ENCODE measurements at regions of chr6 and their contacts with region 1.

Region 1: GRCh38 chr6:145814501-145815308 is at the start of gene FBXO30:
- DNase-seq: peak; percentile 80
- ATAC-seq: peak; percentile 86
- H3K4me3 ChIP-seq: peak within 1 kb of the TSS; percentile 99
- H3K27ac ChIP-seq: peak within 1 kb of the TSS; percentile 93
- H3K4me1 ChIP-seq: peaks cover 6% of the 10 kb centered on the region
- H3K27me3 ChIP-seq: no peaks in the 10 kb centered on the region
- CTCF ChIP-seq: no peak
- POLR2A ChIP-seq: peak; percentile 90
- RAD21 ChIP-seq: no peak
- total RNA-seq, gene FBXO30: 9.3 and 15.3 TPM in 2 replicates

Region 2: DNA sequence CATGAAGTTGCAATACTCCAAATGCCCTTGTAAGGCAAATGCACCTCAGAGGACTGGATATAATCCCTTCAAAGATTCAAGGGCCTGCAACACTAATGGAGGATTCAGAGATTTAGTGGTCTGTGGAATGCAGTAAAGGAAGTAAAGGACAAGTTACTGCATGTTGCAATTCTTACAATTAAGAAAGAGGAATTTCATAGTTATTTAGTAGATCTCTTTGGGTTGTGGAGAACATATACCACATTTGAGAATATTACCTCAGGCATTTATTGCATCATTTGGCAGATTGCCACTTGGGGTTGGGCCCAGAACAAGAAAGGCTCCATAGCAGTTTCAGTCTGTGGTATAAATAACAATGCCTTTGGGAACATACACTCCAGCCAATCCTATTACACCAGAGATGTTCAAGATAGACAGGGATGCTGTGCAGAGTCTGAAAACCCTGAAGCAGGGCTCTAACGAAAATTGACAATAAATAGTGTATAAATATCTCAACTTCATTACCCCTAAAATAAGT is 58.5 kb before region 1 on chr6:
- CTCF ChIA-PET with region 1: no interaction called
- POLR2A ChIA-PET with region 1: no interaction called
- dilution Hi-C with region 1: no loop called
- in situ Hi-C with region 1: no loop called
- intact Hi-C with region 1: no loop called
- DNase-seq: peak; percentile 89
- ATAC-seq: peak; percentile 79
- H3K4me3 ChIP-seq: no peak overlapping the region
- H3K27ac ChIP-seq: peak overlapping the region; percentile 72; the same call in 1 of the 2 replicates
- H3K4me1 ChIP-seq: peaks cover 3% of the 10 kb centered on the region; the same call in 1 of the 2 replicates
- H3K27me3 ChIP-seq: no peaks in the 10 kb centered on the region
- CTCF ChIP-seq: no peak
- POLR2A ChIP-seq: no peak
- RAD21 ChIP-seq: no peak

Region 3: GRCh38 chr6:145882121-145882545 is 67.4 kb after region 1 on chr6:
- CTCF ChIA-PET with region 1: no interaction called
- POLR2A ChIA-PET with region 1: no interaction called
- dilution Hi-C with region 1: no loop called
- in situ Hi-C with region 1: no loop called
- intact Hi-C with region 1: loop called (anchors 2 kb)
- DNase-seq: peak; percentile 88
- ATAC-seq: peak; percentile 83
- H3K4me3 ChIP-seq: no peak overlapping the region
- H3K27ac ChIP-seq: peak overlapping the region; percentile 91; the same call in 1 of the 2 replicates
- H3K4me1 ChIP-seq: peaks cover 7% of the 10 kb centered on the region
- H3K27me3 ChIP-seq: no peaks in the 10 kb centered on the region
- CTCF ChIP-seq: no peak
- POLR2A ChIP-seq: no peak
- RAD21 ChIP-seq: no peak

Region 4: GRCh38 chr6:145887969-145888368 is 73.3 kb after region 1 on chr6:
- CTCF ChIA-PET with region 1: no interaction called
- POLR2A ChIA-PET with region 1: no interaction called
- dilution Hi-C with region 1: no loop called
- in situ Hi-C with region 1: no loop called
- intact Hi-C with region 1: loop called (anchors 2 kb)
- DNase-seq: peak; percentile 42
- ATAC-seq: no peak
- H3K4me3 ChIP-seq: no peak overlapping the region
- H3K27ac ChIP-seq: no peak overlapping the region
- H3K4me1 ChIP-seq: peaks cover 8% of the 10 kb centered on the region
- H3K27me3 ChIP-seq: no peaks in the 10 kb centered on the region
- CTCF ChIP-seq: peak; percentile 67
- POLR2A ChIP-seq: no peak
- RAD21 ChIP-seq: peak; percentile 67